Activated CD8-positive, alpha-beta memory T cell treated with anti-CD3 and anti-CD28 coated beads, Interleukin-2, amount 10 ng/mL, durations not matched to agents 7 days and 5 days (primary cell): ENCODE measurements at regions of chr1 and their contacts with region 1.

Region 1: DNA sequence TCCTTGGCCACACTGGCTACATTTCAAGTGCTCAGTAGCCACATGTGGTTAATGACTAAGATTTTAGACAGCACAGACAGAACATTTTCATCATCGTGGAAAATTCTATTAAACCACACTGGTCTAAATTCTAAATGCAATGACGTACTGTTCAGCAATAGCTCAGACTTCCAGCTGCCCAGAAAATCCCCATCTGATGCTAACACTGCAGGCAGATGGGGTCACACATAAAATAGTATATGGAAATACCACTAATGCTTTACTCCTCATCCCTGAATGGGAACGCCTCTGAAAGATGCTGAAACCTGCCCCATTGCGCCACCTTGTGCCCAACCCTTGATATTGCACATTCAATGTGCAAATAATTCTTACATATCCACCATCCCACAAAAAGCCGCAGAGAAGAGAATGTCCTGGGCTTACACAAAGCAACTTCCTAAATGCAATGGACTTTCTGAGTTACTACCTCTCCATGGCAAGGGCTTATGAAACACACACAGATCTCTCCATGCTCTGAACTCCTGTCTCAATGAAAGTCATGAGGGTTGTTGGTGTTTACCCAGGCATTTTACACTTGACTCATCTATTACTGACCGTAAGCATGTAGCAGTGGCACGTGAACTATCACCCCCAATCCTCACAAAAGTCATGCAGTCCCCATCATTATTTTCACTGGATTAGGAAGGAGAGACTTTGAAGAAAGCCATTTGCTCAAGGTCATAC is 20.3 kb upstream of the SLC5A9 start:
- DNase-seq: peak; percentile 63
- ATAC-seq: peak; percentile 23
- H3K4me3 Mint-ChIP-seq: no peak overlapping the region
- H3K27ac Mint-ChIP-seq: no peak overlapping the region
- H3K4me1 Mint-ChIP-seq: no peaks in the 10 kb centered on the region
- H3K27me3 Mint-ChIP-seq: peaks cover 3% of the 10 kb centered on the region

Region 2: DNA sequence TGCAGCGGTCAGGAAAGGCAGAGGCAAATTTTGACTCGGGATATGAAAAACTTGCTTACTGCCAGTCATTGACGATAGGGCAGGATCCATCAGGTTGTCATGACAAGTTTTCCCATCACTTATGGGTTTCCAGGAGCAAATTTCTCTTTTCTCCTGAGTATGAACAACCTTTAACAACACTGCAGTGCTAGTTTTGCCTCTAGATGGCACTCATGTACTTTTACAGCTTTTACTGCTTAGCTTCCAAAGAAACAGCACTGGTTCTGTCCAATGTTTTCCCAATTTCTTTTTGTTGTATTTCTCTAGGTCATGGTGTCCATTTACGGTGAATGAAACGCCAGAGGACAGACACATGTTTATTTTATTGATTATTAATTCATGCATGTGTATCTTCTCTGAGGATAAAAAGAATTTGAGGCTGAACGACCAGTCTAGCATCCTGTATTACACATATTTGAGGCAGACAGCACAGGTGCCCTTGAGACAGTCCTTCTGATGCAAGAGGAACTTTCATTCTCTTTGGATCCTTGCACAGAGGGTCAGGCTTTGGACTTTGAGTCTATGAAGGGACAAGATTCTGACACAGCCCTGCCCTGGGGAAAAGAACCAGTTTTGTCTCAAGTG is 92.7 kb before region 1 on chr1:
- CTCF ChIA-PET with region 1: interaction called, 18 read pairs
- DNase-seq: no peak
- ATAC-seq: no peak
- H3K4me3 Mint-ChIP-seq: no peak overlapping the region
- H3K27ac Mint-ChIP-seq: no peak overlapping the region
- H3K4me1 Mint-ChIP-seq: peaks cover 3% of the 10 kb centered on the region
- H3K27me3 Mint-ChIP-seq: peaks cover 8% of the 10 kb centered on the region